K562 (cell line): ENCODE measurements at regions of chr3 and their contacts with region 1.

Region 1: GRCh38 chr3:48151058-48151806 is 37.0 kb downstream of the CDC25A start:
- DNase-seq: peak; percentile 75 to 83 (median 76)
- ATAC-seq: peak; percentile 98
- H3K4me3 ChIP-seq: no peak overlapping the region
- H3K27ac ChIP-seq: no peak overlapping the region
- H3K4me1 ChIP-seq: 0 out of 5 replicates have a peak, but pooled peaks cover 0 to 2% of the 10 kb centered on the region in 2 experiments
- H3K27me3 ChIP-seq: 0 out of 5 replicates have a peak, but pooled peaks cover 0 to 2% of the 10 kb centered on the region in 2 experiments
- CTCF ChIP-seq: peak; percentile 88 to 96 (median 95)
- EP300 ChIP-seq: peak; percentile 19; the same call in 1 of the 2 replicates
- POLR2A ChIP-seq: no peak
- RAD21 ChIP-seq: peak; percentile 90 to 95

Region 2: DNA sequence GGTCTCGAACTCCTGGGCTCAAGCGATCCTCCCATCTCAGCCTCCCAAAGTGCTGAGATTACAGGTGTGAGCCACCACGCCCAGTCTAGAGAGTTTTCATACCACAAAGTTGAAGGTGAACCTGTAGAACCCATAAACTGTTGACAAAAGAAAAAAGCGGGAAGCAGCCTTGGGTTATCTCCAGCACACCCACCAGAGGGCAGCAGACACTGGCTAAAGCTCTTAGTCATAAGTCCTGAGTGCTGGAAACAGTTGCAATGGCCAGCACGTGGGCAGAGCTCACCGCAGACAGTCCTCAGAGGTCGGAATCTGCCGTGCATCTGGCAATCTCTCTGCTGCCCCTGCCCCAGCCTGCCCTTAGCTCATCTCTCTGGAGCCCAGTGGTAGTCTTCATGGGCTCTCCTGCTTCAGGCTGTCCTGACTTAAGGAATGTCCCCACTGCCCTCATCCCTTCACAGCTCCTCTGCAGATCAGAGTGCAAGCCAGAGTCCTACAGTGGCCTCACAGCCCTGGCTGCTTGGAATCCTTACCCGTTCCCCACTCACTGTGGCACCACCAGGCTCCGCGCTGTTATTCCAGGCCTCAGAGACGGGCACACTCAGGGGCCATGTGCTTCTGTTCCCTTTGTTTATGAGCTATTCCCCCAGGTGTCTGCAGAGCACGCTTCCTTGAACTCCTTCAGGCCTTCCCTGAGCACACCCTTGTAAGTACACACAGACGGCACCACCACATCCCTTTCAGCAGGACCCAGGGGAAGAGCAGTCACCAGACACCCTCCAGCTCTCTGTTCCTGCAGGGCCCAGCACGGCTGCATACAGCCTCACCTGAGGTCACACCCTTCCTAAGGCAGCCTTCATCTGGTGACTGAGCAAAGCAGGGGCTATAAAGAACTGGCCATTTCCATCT is 628.9 kb before region 1 on chr3:
- CTCF ChIA-PET with region 1: interaction called, 4 read pairs
- POLR2A ChIA-PET with region 1: no interaction called
- in situ Hi-C with region 1: loop called (anchors 10 kb)
- intact Hi-C with region 1: loop called (anchors 1 kb)
- DNase-seq: peak; percentile 72 to 93 (median 81)
- ATAC-seq: peak; percentile 97
- H3K4me3 ChIP-seq: no peak overlapping the region
- H3K27ac ChIP-seq: peak overlapping the region; percentile 18; the same call in 1 of the 3 replicates
- H3K4me1 ChIP-seq: peaks cover 9 to 11% of the 10 kb centered on the region in 2 experiments; a peak in 4 of 5 replicates
- H3K27me3 ChIP-seq: no peaks in the 10 kb centered on the region
- CTCF ChIP-seq: peak; percentile 89 to 98 (median 92)
- EP300 ChIP-seq: peak; percentile 52
- POLR2A ChIP-seq: no peak
- RAD21 ChIP-seq: peak; percentile 98 to 100

Region 3: DNA sequence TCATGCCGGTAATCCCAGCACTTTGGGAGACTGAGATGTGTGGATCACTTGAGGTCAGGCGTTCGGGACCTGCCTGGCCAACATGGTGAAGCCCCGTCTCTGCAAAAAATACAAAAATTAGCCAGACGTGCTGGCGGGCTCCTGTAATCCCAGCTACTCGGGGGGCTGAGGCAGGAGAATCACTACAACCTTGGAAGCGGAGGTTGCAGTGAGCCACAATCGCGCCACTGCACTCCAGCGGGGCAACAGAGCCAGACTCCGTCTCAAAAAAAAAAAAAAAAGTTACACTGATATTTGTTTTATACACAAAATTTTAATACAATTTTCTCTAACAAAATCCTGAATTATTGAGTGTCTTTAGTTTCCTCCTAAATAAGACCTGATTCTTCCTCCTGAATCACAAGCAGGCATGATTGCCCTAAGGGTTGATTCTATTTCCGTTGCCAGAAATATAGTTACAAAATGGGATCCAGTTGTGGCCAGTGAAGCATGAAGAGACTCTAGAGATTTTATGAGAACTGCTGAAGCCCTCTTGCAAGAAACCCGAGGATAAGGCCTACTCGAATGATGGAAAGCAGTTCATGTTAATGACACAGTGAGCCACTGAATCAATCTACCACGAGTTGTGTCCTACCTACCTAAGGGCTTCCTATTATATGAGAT is 359.9 kb before region 1 on chr3:
- CTCF ChIA-PET with region 1: interaction called, 4 read pairs
- POLR2A ChIA-PET with region 1: no interaction called
- in situ Hi-C with region 1: no loop called
- intact Hi-C with region 1: loop called (anchors 1 kb)
- DNase-seq: no peak
- ATAC-seq: no peak
- H3K4me3 ChIP-seq: no peak overlapping the region
- H3K27ac ChIP-seq: no peak overlapping the region
- H3K4me1 ChIP-seq: peaks cover 0 to 6% of the 10 kb centered on the region in 2 experiments; a peak in 2 of 5 replicates
- H3K27me3 ChIP-seq: no peaks in the 10 kb centered on the region
- CTCF ChIP-seq: no peak
- EP300 ChIP-seq: no peak
- POLR2A ChIP-seq: no peak
- RAD21 ChIP-seq: no peak

Region 4: DNA sequence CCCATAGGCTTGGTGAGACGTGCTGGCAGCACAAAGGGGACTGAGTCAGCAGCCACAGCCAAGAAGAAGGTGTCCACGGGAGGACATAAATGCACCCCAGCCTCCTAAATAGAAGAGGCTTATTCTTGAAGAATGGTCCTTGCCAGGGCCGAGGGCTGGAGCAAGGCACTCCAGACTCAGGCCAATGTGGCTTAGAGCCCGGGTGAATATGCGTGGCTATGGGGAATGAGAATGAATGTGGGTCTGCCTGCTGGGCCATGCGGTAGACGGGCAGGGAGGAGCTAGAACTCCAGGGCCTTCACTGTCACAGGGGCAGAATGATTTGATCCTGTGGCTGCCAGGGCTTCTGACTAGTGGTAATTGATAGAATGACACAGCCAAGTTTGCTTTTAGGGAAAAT is 314.2 kb before region 1 on chr3:
- CTCF ChIA-PET with region 1: interaction called, 13 read pairs
- POLR2A ChIA-PET with region 1: interaction called, 7 read pairs
- in situ Hi-C with region 1: loop called (anchors 5 kb)
- intact Hi-C with region 1: loop called (anchors 5 kb)
- DNase-seq: no peak
- ATAC-seq: peak; percentile 8; the same call in 2 of the 3 replicates
- H3K4me3 ChIP-seq: no peak overlapping the region
- H3K27ac ChIP-seq: no peak overlapping the region
- H3K4me1 ChIP-seq: no peaks in the 10 kb centered on the region
- H3K27me3 ChIP-seq: no peaks in the 10 kb centered on the region
- CTCF ChIP-seq: no peak
- EP300 ChIP-seq: no peak
- POLR2A ChIP-seq: no peak
- RAD21 ChIP-seq: no peak

Region 5: GRCh38 chr3:47865192-47865591 is 286.0 kb before region 1 on chr3:
- CTCF ChIA-PET with region 1: no interaction called
- POLR2A ChIA-PET with region 1: no interaction called
- in situ Hi-C with region 1: loop called (anchors 10 kb)
- intact Hi-C with region 1: no loop called
- DNase-seq: no peak
- ATAC-seq: peak; percentile 71
- H3K4me3 ChIP-seq: no peak overlapping the region
- H3K27ac ChIP-seq: no peak overlapping the region
- H3K4me1 ChIP-seq: peaks cover 0 to under 1% of the 10 kb centered on the region in 2 experiments; a peak in 2 of 5 replicates
- H3K27me3 ChIP-seq: no peaks in the 10 kb centered on the region
- CTCF ChIP-seq: peak in 1 of 3 experiments; percentile 34; a peak in 2 of 6 replicates
- EP300 ChIP-seq: no peak
- POLR2A ChIP-seq: no peak
- RAD21 ChIP-seq: 0 out of 4 replicates have a peak, but pooled peaks of 1 of the 2 experiments have one; percentile 16

Region 6: DNA sequence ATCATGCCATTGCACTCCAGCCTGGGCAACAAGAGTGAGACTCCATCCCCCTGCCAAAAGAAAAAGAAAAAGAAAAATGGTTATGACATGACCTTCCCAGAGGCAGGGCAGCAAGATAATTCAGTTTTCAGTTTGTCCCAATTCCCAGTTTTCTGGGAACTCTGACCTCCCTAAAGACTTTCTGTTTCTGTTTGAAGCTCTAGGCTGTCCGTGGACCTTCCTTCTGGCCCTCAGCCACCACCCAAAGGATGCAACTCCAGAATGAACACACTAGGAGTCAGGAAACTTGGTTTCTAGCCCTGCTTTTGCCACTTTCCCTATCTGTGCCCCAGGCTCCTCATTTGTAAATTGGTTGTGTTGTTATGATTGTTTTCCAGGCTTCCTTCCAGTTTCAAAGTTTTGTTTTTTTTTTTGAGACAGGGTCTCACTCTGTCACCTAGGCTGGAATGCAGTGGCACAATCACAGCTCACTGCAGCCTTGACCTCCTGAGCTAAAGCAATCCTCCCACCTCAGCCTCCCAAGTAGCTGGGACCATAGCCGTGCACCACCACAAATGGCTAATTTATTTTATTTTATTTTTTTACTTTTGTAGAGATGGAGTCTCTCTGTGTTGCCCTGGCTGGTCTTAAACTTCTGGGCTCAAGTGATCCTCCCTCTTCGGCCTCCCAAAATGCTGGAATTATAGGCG is 31.6 kb before region 1 on chr3:
- CTCF ChIA-PET with region 1: no interaction called
- POLR2A ChIA-PET with region 1: no interaction called
- in situ Hi-C with region 1: no loop called
- intact Hi-C with region 1: no loop called
- DNase-seq: peak in 1 of 4 experiments; percentile 4
- ATAC-seq: peak; percentile 25; the same call in 2 of the 3 replicates
- H3K4me3 ChIP-seq: no peak overlapping the region
- H3K27ac ChIP-seq: no peak overlapping the region
- H3K4me1 ChIP-seq: no peaks in the 10 kb centered on the region
- H3K27me3 ChIP-seq: peaks cover 2 to 12% of the 10 kb centered on the region in 2 experiments; a peak in 2 of 5 replicates
- CTCF ChIP-seq: no peak
- EP300 ChIP-seq: no peak
- POLR2A ChIP-seq: no peak
- RAD21 ChIP-seq: no peak